Activated naive CD8-positive, alpha-beta T cell treated with anti-CD3 and anti-CD28 coated beads, Interleukin-2, amount 10 ng/mL, durations not matched to agents 7 days and 5 days (primary cell): ENCODE measurements at regions of chr19 and their contacts with region 1.

Region 1: DNA sequence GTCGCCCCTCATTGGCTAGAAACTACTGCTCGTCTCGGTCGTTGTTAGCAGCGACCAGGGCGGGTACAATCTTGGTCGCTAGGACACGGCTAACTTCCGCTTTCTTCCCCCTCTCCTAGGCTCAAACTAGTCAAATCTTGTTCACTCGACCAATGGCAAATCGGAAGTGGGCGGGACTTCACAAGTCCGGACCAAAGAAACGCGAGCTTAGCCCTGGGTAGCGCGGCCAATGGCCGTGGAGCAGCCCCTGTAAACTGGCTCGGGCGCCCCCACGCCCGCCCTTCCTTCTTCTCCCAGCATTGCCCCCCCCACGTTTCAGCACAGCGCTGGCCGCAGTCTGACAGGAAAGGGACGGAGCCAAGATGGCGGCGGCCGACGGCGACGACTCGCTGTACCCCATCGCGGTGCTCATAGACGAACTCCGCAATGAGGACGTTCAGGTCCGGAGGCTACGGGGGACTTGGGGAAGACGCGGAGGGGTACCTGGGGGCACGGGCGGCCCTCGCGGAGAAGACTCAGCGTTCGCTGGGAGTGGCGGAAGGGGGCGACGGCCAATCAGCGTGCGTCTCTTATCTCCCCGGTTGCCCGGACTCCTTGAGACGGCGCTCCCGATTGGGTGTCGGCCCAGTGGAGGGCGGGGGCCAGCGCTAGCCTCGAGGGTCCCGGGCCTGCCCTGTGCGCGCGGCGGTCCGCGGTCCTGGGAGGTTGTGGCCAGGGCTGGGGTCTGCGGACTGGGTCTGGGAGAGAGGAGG is at the start of gene PPP2R1A:
- DNase-seq: peak; percentile 97
- ATAC-seq: peak; percentile 85
- H3K4me3 Mint-ChIP-seq: peak within 1 kb of the TSS; percentile 99
- H3K27ac Mint-ChIP-seq: peak within 1 kb of the TSS; percentile 100
- H3K4me1 Mint-ChIP-seq: peaks cover 30% of the 10 kb centered on the region
- H3K27me3 Mint-ChIP-seq: no peaks in the 10 kb centered on the region
- total RNA-seq, gene PPP2R1A: 184 to 187 TPM

Region 2: DNA sequence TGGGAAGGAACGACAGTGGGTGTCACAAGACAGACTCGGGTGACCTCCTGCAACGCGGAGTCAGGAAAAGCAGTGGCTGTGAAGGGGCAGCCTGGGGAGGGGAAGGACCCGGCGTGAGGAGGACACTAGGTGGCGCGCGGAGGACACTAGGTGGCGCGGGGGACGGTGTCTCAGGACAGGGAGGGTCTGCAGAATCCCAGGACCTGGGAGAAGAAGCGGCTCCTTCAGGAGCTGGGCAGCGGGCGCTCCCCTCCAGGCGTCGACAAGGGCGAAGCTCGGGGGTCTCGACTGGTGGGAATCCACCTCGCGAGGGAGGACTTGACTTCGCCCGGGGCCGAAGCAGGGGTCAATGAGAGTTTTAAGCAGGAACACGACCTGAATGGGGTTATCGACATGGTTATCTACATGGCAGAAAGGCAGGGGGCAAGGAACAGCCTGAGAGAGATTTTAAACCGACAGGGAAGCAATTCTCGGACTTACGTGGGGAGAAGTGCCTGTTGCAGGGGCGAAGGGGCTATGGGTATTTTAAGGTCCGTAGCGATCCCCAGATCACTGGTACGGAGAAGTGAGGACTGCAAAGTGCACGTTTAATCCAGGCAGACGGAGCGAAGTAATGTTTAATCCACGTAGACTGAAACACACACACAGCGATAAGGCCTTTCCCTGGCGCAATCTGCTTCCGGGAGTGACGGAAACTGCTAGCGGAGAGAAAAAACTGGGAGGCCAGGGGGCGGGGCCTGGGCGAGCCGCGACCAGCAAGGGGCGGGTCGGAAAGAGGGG is 50.5 kb before region 1 on chr19 and contains the start of gene ZNF616:
- POLR2A ChIA-PET with region 1: interaction called, 20 read pairs
- DNase-seq: peak; percentile 98
- ATAC-seq: peak; percentile 79
- H3K4me3 Mint-ChIP-seq: peak within 1 kb of the TSS; percentile 91
- H3K27ac Mint-ChIP-seq: peak within 1 kb of the TSS; percentile 88
- H3K4me1 Mint-ChIP-seq: peaks cover 16% of the 10 kb centered on the region
- H3K27me3 Mint-ChIP-seq: no peaks in the 10 kb centered on the region
- total RNA-seq, gene ZNF616: 12.1 to 13.3 TPM

Region 3: GRCh38 chr19:52171321-52172169 is 18.4 kb before region 1 on chr19 and contains the start of gene ZNF836:
- POLR2A ChIA-PET with region 1: interaction called, 26 read pairs
- DNase-seq: peak; percentile 91
- ATAC-seq: peak; percentile 96
- H3K4me3 Mint-ChIP-seq: peak within 1 kb of the TSS; percentile 92
- H3K27ac Mint-ChIP-seq: peak within 1 kb of the TSS; percentile 94
- H3K4me1 Mint-ChIP-seq: peaks cover 19% of the 10 kb centered on the region
- H3K27me3 Mint-ChIP-seq: no peaks in the 10 kb centered on the region
- total RNA-seq, gene ZNF836: 25.8 to 29.2 TPM